Aorta (tissue), 5 donors: ENCODE measurements at regions of chr10 and their contacts with region 1.

Region 1: DNA sequence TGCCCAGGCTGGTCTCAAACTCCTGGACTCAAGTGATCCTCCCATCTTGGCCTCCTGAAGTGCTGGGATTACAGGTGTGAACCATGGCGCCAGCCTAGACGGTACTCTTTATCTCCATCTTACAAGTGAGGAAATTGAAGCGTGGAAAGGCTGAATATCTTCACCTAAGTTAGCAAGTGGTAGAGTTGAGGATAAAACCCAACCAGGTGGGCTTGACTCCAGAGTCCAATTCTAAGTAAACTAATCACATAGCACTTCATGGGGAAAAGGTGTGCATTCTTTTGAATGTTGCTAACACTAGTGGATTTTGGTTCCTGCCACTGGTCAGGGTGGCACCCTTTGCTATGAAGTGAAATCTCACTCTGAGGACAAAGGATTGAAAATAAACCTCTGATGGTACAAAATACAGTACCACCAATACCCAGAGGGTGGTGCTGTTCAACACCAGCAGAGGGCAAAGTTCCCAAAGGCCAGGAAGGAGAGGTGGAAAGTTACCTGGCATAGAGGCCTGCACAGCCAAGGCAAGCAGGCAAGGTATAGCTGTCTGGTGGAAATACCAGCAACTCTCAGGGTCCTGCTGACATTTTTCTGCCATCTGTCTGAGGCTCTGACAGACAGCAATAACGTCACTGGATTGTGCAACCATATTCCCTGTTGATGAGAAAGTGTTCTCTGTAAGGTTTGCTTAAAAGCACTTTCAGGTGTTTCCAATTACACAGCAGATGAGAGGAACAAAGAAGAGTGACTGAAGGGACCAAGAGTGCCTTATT is 17.6 kb downstream of the ZDHHC16 start:
- DNase-seq: no peak
- ATAC-seq: peak; percentile 67
- H3K4me3 ChIP-seq: no peak overlapping the region
- H3K27ac ChIP-seq: peak overlapping the region in 1 of 2 donors; percentile 6
- H3K4me1 ChIP-seq: no peaks in the 10 kb centered on the region
- H3K27me3 ChIP-seq: no peaks in the 10 kb centered on the region

Region 2: GRCh38 chr10:97612386-97612785 is 148.8 kb after region 1 on chr10:
- intact Hi-C with region 1: loop called in 1 of 2 experiments (anchors 5 kb)
- DNase-seq: no peak
- ATAC-seq: peak; percentile 72
- H3K4me3 ChIP-seq: no peak overlapping the region
- H3K27ac ChIP-seq: no peak overlapping the region
- H3K4me1 ChIP-seq: peaks cover 0 to 6% of the 10 kb centered on the region in 2 donors
- H3K27me3 ChIP-seq: no peaks in the 10 kb centered on the region